GM13977 (cell line): ENCODE measurements at regions of chr1 and their contacts with region 1.

Region 1: GRCh38 chr1:22416555-22417454 is 34.8 kb upstream of the ZBTB40 start:
- DNase-seq: peak; percentile 79
- CTCF ChIP-seq: peak; percentile 95

Region 2: DNA sequence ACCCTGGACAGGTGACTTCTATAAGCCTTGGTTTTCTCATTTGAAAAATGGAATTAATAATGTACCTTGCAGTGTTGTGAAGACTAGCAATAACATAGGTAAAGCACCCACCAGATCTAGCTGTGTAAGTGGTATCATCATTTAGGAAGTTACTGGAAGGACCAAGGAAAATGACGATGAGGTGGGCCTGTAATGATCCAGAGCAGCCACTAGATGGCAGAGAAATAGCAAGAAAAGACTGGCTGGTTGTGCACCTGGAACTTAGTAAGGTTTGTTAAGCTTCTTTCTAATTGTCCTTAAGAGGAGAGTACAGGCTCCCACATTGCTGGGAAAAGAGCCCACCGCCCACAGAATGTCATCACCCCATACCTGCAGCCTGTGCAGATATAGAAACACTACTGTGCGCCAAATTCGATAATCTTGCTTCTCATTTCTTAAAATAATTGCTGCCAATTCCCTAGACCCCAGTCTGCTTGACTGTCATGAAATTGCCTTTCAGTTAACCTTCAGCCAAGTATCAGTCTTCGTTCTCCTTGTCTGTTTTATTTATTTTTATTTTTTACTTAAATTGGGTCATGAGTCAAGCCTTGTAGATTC is 311.1 kb before region 1 on chr1:
- in situ Hi-C with region 1: loop called (anchors 25 kb)
- DNase-seq: peak; percentile 59
- CTCF ChIP-seq: peak; percentile 79

Region 3: DNA sequence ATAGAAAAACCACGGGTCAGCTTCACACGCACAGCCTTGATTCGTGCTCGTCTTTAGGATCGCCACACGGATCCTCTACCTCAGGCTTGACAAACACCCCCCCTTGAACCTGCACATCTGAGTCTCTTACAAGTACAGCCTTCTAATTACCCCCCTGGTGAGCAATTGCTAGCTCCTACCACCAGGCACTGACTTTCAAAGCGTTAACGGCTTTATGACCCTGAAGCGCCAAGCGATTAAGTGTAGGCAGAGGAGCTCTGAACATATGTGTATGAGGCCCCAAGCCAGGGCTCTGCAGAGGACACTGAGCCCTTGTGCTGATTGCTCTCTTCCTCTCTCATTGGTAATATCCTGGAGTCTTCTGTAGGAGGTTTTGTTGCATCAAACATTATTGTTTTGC is 90.8 kb after region 1 on chr1:
- in situ Hi-C with region 1: no loop called
- DNase-seq: no peak
- CTCF ChIP-seq: no peak

Region 4: DNA sequence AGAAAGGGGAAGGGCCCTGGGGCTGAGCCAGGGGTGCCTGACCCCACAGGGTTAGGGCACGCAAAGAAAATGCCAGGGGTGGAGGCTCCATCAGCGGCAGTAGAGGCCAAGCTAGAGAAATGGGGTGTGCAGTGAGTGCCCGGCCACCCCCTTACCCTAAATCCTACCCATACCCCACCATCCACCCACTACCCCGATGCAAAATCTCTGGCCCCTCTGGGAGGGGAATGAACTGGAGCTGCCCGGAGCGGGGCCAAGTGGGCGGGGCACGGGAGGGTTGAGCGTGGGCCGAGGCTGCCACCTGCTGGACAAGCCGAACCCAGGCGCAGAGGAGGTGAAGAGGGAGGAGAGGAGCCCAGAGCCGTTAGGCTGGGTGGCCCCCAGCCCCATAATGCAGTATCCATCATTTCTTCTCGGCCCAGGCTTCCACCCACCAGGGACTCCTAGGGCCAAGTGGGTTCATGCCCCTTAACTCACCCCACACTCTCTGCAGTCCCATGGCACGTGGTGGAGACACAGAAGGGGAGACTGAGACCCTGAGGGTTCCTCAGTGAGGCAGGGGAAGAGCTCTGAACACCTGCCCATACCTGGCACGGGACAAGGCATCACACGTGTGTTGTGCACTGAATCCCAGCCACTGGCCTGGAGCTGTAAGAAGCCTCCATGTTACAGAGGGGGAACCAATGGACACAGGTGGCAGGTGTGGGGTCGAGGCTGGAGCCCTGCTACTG is 225.3 kb after region 1 on chr1:
- in situ Hi-C with region 1: loop called (anchors 25 kb)
- DNase-seq: peak; percentile 86
- CTCF ChIP-seq: peak; percentile 92